ENCODE measurements at regions of chr15 and their contacts with region 1.

Region 1: DNA sequence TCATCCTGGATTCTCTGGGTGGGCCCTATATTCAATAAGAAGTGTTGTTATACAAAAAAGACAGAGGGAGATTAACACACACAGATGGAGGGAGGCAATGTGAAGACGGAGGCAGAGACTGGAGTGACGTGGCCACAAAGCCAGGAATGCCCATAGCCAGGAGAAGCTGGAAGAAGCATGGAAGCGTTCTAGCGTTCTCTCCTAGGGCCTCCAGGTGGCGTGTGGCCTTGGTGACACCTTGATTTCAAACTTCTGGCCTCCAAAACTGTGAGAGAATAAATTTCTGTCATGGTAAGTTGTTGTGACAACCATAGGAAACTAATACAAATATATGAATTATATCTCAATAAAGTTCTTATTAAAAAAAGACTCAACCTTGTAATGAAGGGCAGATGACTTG is 21.3 kb downstream of the THBS1 start:
- DNase-seq: no peak
- H3K4me3 ChIP-seq: no peak overlapping the region
- CTCF ChIP-seq: no peak
- POLR2A ChIP-seq: no peak

Region 2: GRCh38 chr15:37951999-37952398 is 1650.1 kb before region 1 on chr15:
- intact Hi-C with region 1: loop called (anchors 5 kb)
- DNase-seq: no peak
- H3K4me3 ChIP-seq: no peak overlapping the region
- CTCF ChIP-seq: no peak
- POLR2A ChIP-seq: no peak

Region 3: GRCh38 chr15:39381517-39381916 is 220.6 kb before region 1 on chr15:
- intact Hi-C with region 1: no loop called
- DNase-seq: no peak
- H3K4me3 ChIP-seq: no peak overlapping the region
- CTCF ChIP-seq: no peak
- POLR2A ChIP-seq: no peak

Region 4: GRCh38 chr15:39479911-39480310 is 122.2 kb before region 1 on chr15:
- intact Hi-C with region 1: no loop called
- DNase-seq: no peak
- H3K4me3 ChIP-seq: no peak overlapping the region
- CTCF ChIP-seq: no peak
- POLR2A ChIP-seq: no peak

Region 5: DNA sequence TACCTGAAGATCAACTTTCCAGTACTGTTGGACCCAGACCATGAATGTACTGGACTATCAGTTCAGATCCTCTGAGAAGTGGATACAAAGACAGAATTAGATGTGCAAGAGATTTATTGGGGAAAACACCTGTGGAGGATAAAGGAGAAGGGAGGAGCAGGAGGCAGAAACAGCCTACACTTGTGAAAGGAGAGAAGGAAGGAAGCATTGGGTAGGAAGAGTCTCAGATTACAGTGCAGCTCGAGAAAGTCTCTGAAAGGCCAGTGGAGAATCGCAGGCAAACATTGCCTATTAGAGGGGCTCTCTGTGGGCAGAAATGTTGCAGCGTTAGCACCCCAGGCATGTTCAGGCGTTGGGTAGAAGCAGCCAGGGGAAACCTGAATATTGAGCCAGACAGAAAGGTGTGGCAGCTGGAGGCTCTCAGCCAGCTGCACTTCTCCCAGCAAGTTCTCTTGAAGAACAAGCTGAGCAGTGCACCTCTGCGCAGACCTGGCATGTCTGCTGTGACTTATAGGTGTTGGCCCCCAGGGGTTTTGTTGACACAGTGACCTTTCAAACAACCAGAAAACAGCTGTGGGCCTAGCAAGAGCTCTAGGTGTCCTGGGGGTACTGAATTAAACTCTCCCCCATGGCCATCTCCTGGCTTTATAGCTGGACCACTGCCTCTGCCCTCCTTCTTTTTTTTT is 875.6 kb after region 1 on chr15:
- intact Hi-C with region 1: no loop called
- DNase-seq: peak; percentile 49 to 83
- H3K4me3 ChIP-seq: no peak overlapping the region
- CTCF ChIP-seq: no peak
- POLR2A ChIP-seq: no peak